Dorsolateral prefrontal cortex (tissue), 120 donors: ENCODE measurements at regions of chr2 and their contacts with region 1.

Region 1: DNA sequence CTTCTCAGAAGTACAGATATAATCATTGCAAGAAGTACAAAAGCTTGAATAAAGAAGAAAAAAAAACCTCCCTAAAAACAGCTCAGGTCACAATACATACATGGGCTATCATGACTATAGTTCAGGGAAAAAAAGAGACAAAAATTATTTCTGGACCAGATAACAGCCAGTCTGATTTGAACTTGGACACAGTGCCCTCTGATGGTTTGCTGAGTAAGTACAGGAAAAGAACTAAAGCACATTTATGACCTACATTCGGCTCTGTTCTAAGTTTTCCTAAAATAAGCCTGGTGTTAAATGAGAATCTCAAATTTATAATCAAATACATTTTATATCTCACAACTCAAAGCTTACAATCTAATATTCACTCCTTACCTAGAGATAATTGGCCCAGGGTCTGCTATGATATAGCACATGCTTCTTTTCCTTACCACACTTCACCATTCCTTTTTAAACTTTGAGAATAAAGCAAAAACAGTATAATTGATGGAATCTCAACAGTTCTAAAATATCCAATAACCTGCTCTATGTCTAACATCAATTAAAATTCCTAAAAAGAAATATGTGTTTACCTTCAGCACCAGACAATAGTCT is 81.1 kb downstream of the RAPH1 start:
- DNase-seq: peak in 1 of 10 donors; percentile 15
- H3K4me3 ChIP-seq: no peak overlapping the region
- H3K27ac ChIP-seq: peak overlapping the region in 8 of 59 donors; percentile 5 to 39 (median 27)
- H3K27me3 ChIP-seq: no peaks in the 10 kb centered on the region
- CTCF ChIP-seq: peak; percentile 48 to 87 (median 78)

Region 2: DNA sequence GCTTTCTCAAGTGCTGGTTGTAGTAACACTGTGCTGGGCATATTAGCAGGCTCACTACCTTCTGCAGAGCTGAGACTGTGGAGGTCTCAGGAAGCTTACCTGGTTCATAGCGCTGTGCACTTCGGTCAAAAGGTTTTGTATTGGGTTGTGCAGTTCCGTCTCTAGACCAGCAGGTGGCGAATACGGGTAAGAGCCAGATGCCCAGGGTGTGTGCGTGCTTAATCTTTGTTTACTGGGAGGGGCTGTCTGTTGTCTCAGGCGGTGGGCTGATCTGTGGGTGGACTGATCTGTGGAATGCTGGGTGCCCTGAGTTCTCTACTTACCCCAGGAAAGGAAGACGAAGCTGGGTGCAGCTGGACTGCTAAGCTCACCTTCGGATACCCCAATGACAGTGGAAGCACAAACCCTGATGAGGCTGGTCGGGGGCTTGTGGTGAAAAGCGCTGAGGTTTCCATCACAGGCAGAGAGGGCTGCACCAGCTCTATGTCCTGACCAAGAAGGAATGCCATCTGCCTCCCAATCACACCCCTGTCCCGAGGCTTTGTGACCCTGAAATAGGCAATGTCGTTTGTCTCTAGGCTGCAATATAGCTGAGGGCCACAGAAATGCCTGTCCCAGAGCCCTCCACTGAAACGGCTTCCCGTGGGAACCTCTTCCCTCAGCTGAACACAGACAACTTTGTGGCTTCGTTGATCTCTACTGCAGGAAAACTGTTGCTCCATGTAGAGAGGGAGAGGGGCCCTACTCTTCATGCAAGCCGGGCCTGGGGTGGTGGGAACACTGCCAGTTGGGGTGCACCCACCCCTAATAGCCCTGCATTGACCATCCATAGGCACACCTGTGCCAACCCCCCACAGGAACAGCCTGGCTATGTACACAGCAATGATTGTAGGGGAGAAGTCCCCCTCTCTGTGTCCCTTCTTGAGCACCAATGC is 865.0 kb before region 1 on chr2:
- intact Hi-C with region 1: loop called in 1 of 2 experiments (anchors 10 kb)
- DNase-seq: peak; percentile 24 to 70 (median 64)
- H3K4me3 ChIP-seq: peak overlapping the region in 52 of 59 donors; percentile 3 to 57 (median 34)
- H3K27ac ChIP-seq: no peak overlapping the region
- H3K27me3 ChIP-seq: no peaks in the 10 kb centered on the region
- CTCF ChIP-seq: peak; percentile 79 to 97 (median 91)

Region 3: GRCh38 chr2:202831242-202832220 is 622.4 kb before region 1 on chr2:
- intact Hi-C with region 1: loop called in 1 of 2 experiments (anchors 5 kb)
- DNase-seq: peak in 1 of 10 donors; percentile 18
- H3K4me3 ChIP-seq: no peak overlapping the region
- H3K27ac ChIP-seq: no peak overlapping the region
- H3K27me3 ChIP-seq: no peaks in the 10 kb centered on the region
- CTCF ChIP-seq: peak in 52 of 56 donors; percentile 10 to 68 (median 46)